HEK293 (cell line): ENCODE measurements at regions of chr2 and their contacts with region 1.

Region 1: GRCh38 chr2:234257856-234258561 is 207.5 kb downstream of the SPP2 start:
- H3K4me3 ChIP-seq: no peak overlapping the region
- H3K27ac ChIP-seq: no peak overlapping the region
- H3K4me1 ChIP-seq: no peaks in the 10 kb centered on the region
- CTCF ChIP-seq: peak; percentile 64; the same call in 1 of the 2 replicates

Region 2: DNA sequence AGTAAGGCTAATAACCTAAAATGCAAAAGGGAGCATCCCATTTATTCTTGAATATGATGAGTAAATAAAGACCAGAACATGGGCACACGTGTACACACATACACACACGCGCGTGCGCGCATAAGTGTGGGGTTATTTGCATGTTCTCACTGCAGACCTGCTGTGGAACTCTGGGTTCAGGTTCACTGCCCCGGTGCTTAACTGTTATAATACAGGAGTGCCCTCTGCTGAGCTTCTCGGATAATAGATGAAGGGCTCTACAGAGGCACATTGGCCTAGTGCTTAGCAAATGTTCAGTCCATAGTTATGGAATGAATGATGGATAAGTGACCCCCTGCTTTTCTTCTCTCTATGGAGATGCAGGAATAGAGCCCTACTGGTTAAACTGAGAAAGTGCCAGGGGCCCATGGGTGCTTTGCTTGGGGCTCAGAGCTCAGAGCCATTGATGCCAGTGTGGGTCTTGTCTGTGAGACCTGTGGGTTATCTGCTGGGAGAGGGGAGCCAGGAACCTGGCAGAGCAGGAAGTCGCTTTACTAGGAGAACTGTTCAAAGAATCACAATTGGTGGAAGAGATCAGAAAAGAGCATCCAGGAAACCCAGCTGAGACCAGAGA is 242.5 kb after region 1 on chr2:
- CTCF ChIA-PET with region 1: interaction called, 12 read pairs
- POLR2A ChIA-PET with region 1: no interaction called
- H3K4me3 ChIP-seq: no peak overlapping the region
- H3K27ac ChIP-seq: no peak overlapping the region
- H3K4me1 ChIP-seq: peaks cover 12% of the 10 kb centered on the region
- CTCF ChIP-seq: no peak